B cell (primary cell): ENCODE measurements at regions of chr7 and their contacts with region 1.

Region 1: GRCh38 chr7:107725151-107725740 is 18.7 kb upstream of the CBLL1 start:
- DNase-seq: peak; percentile 76
- ATAC-seq: peak; percentile 31
- H3K4me3 ChIP-seq: no peak overlapping the region
- H3K4me3 Mint-ChIP-seq: no peak overlapping the region
- H3K27ac ChIP-seq: no peak overlapping the region
- H3K27ac Mint-ChIP-seq: no peak overlapping the region
- H3K4me1 ChIP-seq: no peaks in the 10 kb centered on the region
- H3K4me1 Mint-ChIP-seq: no peaks in the 10 kb centered on the region
- H3K27me3 ChIP-seq: peaks cover 0 to 6% (median 1%) of the 10 kb centered on the region in 4 experiments
- H3K27me3 Mint-ChIP-seq: peaks cover 23% of the 10 kb centered on the region
- CTCF ChIP-seq: peak; percentile 87

Region 2: DNA sequence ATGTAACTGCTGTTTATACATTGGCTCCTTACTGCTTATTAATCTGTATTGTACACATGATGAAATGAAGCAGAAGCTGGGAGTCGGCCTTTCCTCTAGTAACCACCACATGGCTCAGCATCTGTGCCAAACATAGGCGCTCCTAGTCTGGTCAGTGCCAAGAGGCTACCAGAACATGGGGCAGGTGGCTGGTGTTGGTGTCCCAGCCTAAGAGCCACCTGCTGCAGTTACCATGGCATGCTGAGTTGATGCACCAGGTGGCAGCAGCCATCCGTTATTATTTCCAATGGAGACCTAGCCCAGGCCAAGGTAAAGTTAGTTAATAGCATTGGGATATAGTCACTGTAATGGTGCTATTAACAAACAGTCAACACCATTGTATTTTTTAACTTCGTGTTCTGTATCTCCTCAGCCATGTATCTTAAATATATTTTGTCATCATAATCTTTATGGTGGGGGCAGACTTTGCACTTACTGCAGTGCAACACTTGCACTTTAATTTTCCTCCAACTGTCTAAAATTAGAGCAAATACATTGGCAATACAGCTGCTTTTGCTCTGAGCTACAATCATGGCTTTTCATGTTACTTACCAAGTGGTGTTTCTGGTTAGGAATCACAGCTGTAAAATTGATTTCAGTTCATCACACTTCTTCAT is 523.3 kb before region 1 on chr7:
- CTCF ChIA-PET with region 1: interaction called, 3 read pairs
- POLR2A ChIA-PET with region 1: no interaction called
- intact Hi-C with region 1: loop called (anchors 2 kb)
- DNase-seq: peak; percentile 40
- ATAC-seq: no peak
- H3K4me3 ChIP-seq: no peak overlapping the region
- H3K4me3 Mint-ChIP-seq: no peak overlapping the region
- H3K27ac ChIP-seq: no peak overlapping the region
- H3K27ac Mint-ChIP-seq: no peak overlapping the region
- H3K4me1 ChIP-seq: no peaks in the 10 kb centered on the region
- H3K4me1 Mint-ChIP-seq: no peaks in the 10 kb centered on the region
- H3K27me3 ChIP-seq: no peaks in the 10 kb centered on the region
- H3K27me3 Mint-ChIP-seq: no peaks in the 10 kb centered on the region
- CTCF ChIP-seq: peak; percentile 53

Region 3: DNA sequence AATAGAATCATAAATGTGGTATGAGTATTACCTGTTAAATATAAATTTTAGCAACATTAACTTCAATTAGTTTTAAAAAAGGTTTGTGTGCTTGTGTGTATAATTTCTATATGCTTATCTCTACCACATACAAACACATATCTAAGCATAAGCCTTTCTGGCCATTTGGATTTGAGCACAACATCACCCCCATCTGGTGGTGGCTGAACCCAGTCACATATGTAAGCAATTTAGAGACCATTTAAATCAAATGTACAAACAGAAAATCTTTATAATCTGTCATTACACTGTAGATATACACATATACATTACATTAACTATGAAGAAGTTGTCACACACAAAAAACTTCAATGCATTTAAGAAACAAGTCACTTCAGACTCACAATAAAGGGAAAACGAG is 223.7 kb before region 1 on chr7:
- CTCF ChIA-PET with region 1: interaction called, 10 read pairs
- POLR2A ChIA-PET with region 1: no interaction called
- intact Hi-C with region 1: no loop called
- DNase-seq: peak; percentile 35
- ATAC-seq: no peak
- H3K4me3 ChIP-seq: no peak overlapping the region
- H3K4me3 Mint-ChIP-seq: no peak overlapping the region
- H3K27ac ChIP-seq: no peak overlapping the region
- H3K27ac Mint-ChIP-seq: no peak overlapping the region
- H3K4me1 ChIP-seq: no peaks in the 10 kb centered on the region
- H3K4me1 Mint-ChIP-seq: peaks cover 3% of the 10 kb centered on the region
- H3K27me3 ChIP-seq: no peaks in the 10 kb centered on the region
- H3K27me3 Mint-ChIP-seq: no peaks in the 10 kb centered on the region
- CTCF ChIP-seq: peak; percentile 44

Region 4: GRCh38 chr7:107579885-107580715 is 145.1 kb before region 1 on chr7 and contains the start of gene BCAP29:
- CTCF ChIA-PET with region 1: interaction called, 4 read pairs
- POLR2A ChIA-PET with region 1: no interaction called
- intact Hi-C with region 1: loop called (anchors 2 kb)
- DNase-seq: peak; percentile 87
- ATAC-seq: peak; percentile 98
- H3K4me3 ChIP-seq: peak within 1 kb of the TSS; percentile 75 to 93 (median 85)
- H3K4me3 Mint-ChIP-seq: peak within 1 kb of the TSS; percentile 85
- H3K27ac ChIP-seq: peak within 1 kb of the TSS; percentile 66 to 80
- H3K27ac Mint-ChIP-seq: peak within 1 kb of the TSS; percentile 79
- H3K4me1 ChIP-seq: peaks cover 4 to 7% of the 10 kb centered on the region in 2 donors
- H3K4me1 Mint-ChIP-seq: peaks cover 23% of the 10 kb centered on the region
- H3K27me3 ChIP-seq: no peaks in the 10 kb centered on the region
- H3K27me3 Mint-ChIP-seq: no peaks in the 10 kb centered on the region
- CTCF ChIP-seq: no peak
- total RNA-seq, gene BCAP29: 27.3 and 31.8 TPM in 2 replicates

Region 5: DNA sequence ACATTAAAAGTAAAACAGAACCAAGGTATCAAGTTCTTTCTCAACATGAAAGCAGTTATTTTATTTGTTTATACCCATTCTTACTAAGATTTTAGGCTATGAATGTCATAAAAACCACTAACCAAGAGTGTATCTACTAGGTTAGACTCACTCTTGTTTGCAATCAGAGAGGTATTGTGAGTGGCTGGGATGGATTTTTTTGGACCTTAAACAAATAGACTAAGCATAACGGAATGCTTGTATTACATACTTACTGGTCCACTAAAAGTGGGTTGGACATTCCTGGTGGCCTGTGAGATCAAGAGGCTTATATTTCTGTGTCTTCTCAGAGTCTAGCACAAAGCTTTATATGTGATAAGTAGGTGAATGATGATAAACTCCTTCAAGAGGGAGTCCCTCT is 13.9 kb before region 1 on chr7:
- CTCF ChIA-PET with region 1: interaction called, 15 read pairs
- POLR2A ChIA-PET with region 1: no interaction called
- intact Hi-C with region 1: no loop called
- DNase-seq: no peak
- ATAC-seq: no peak
- H3K4me3 ChIP-seq: no peak overlapping the region
- H3K4me3 Mint-ChIP-seq: no peak overlapping the region
- H3K27ac ChIP-seq: no peak overlapping the region
- H3K27ac Mint-ChIP-seq: no peak overlapping the region
- H3K4me1 ChIP-seq: no peaks in the 10 kb centered on the region
- H3K4me1 Mint-ChIP-seq: no peaks in the 10 kb centered on the region
- H3K27me3 ChIP-seq: no peaks in the 10 kb centered on the region
- H3K27me3 Mint-ChIP-seq: peaks cover 6% of the 10 kb centered on the region
- CTCF ChIP-seq: no peak

Region 6: GRCh38 chr7:107758667-107759066 is 33.4 kb after region 1 on chr7:
- CTCF ChIA-PET with region 1: no interaction called
- POLR2A ChIA-PET with region 1: no interaction called
- intact Hi-C with region 1: no loop called
- DNase-seq: no peak
- ATAC-seq: no peak
- H3K4me3 ChIP-seq: no peak overlapping the region
- H3K4me3 Mint-ChIP-seq: no peak overlapping the region
- H3K27ac ChIP-seq: no peak overlapping the region
- H3K27ac Mint-ChIP-seq: no peak overlapping the region
- H3K4me1 ChIP-seq: no peaks in the 10 kb centered on the region
- H3K4me1 Mint-ChIP-seq: no peaks in the 10 kb centered on the region
- H3K27me3 ChIP-seq: no peaks in the 10 kb centered on the region
- H3K27me3 Mint-ChIP-seq: no peaks in the 10 kb centered on the region
- CTCF ChIP-seq: no peak